ENCODE measurements at regions of chr10 and their contacts with region 1.

Region 1: DNA sequence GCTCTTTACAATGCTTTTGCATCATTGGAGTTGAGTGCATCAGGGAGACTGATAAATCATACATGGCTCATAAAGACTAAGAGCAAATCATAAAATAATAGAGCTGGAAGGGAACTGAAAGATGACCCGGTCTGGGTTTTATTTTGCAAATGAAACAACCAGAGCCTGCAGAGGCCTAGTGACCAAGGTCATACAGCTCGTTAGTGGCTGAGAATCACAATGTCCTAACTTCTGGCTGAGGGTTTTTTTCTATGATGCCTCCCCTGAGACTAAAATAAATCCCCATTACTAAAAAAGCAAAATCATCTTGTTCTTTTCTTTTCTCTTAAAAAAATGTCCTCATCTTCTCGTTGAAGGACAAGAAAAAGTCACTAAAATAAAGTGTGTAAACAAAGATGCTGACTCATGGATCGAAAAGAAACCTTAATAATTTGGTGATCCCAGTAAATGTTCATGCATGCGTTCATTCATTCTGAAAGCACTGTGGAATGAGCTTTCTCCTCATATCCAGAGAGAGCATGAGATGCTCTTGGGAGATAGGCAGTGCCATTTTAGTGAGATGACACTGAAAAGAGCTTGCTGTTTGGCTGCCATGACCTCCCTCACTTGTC is 107.8 kb upstream of the PHYHIPL start:
- DNase-seq: no peak
- H3K4me3 ChIP-seq: no peak overlapping the region
- H3K27ac ChIP-seq: no peak overlapping the region
- H3K4me1 ChIP-seq: peaks cover 0 to 3% (median 2%) of the 10 kb centered on the region in 4 experiments; a peak in 2 of 7 replicates
- H3K27me3 ChIP-seq: peaks cover 0 to 2% (median 0%) of the 10 kb centered on the region in 4 experiments; a peak in 1 of 7 replicates
- CTCF ChIP-seq: no peak
- EP300 ChIP-seq: no peak
- POLR2A ChIP-seq: no peak
- RAD21 ChIP-seq: no peak

Region 2: DNA sequence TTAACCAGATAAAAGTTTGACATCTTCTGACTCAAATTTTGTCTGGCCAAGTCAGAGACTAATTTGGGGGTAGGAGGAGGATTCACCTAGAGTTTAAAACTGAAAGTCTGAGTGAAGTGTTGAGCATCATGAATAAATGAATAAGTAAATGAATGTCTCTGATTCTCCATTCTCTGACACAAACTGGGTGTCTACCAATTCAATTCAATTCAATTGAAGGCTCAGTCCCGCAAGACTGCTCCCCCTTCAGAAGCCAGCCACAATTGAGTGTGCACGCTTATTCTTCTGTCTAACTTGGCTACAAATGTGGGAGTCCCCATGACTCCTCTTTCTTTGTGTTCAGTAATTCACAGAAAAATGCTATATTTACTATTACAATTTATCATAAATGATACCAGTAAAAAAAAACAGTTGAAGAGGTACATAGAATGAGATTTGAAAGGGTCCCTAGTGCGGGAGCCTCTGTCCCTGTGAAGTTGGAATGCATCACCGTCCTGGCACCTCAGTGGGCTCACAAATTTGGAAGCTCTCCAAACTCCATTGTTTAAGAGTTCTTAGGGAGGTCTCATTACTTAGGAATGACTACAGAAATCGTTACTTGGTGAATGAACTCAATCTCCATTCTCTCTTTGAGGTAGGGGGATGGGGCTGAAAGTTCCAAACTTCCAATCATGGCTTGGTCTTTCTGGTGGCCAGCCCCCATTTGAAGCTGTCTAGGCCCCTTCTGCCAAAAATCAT is 135.9 kb before region 1 on chr10:
- CTCF ChIA-PET with region 1: no interaction called
- POLR2A ChIA-PET with region 1: no interaction called
- DNase-seq: no peak
- H3K4me3 ChIP-seq: no peak overlapping the region
- H3K27ac ChIP-seq: no peak overlapping the region
- H3K4me1 ChIP-seq: no peaks in the 10 kb centered on the region
- H3K27me3 ChIP-seq: no peaks in the 10 kb centered on the region
- CTCF ChIP-seq: no peak
- EP300 ChIP-seq: no peak
- POLR2A ChIP-seq: no peak
- RAD21 ChIP-seq: no peak

Region 3: GRCh38 chr10:59079386-59080226 is 10.9 kb after region 1 on chr10:
- CTCF ChIA-PET with region 1: interaction called, 10 read pairs
- POLR2A ChIA-PET with region 1: interaction called, 3 read pairs
- DNase-seq: no peak
- H3K4me3 ChIP-seq: no peak overlapping the region
- H3K27ac ChIP-seq: no peak overlapping the region
- H3K4me1 ChIP-seq: no peaks in the 10 kb centered on the region
- H3K27me3 ChIP-seq: no peaks in the 10 kb centered on the region; a peak in 1 of 7 replicates
- CTCF ChIP-seq: no peak
- EP300 ChIP-seq: no peak
- POLR2A ChIP-seq: no peak
- RAD21 ChIP-seq: no peak

Measured in H1 (cell line).